Psoas muscle (tissue), 8 donors: ENCODE measurements at regions of chr17 and their contacts with region 1.

Region 1: DNA sequence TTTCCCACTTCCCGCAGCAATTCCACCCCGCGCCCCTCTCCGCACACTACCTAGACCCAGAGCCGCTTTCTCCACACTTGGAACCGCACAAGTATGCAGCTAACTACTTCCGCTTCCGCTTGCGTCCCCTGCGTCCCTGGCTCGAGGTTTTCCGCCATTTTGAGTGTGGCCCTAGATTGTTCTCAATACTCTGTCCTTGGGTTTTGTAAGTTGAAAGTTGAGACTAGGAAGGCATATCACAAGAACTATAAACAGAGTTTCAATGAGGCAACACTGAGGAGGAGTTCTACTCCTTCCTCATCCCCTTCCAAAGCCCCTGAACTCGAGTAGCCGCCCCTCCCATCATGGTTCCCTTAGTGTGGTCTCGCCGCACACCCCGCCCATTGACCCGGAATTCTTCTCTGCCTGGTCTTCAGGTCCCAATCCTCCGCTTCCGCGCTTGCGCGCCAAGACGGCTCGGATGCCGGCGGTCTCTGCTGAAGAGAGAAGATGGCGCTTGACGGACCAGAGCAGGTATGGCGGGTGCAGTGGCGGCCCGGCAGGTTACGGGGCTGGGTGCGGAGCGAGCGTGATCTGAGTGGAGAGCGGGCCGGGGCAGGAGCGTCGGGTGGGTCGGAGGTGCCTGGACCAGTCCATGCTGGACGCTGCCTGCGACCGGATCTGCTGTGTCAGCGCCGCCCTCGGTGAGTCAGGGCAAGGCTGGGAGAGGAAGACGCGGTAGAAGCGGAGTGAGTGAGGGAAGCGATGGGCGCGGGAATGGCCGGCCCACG is at the starts of genes FTSJ3 and PSMC5:
- DNase-seq: peak; percentile 96 to 99
- ATAC-seq: peak; percentile 91 to 95 (median 93)
- H3K4me3 ChIP-seq: peak within 1 kb of the TSS; percentile 93
- H3K27ac ChIP-seq: peak within 1 kb of the TSS; percentile 97
- H3K4me1 ChIP-seq: peaks cover 32% of the 10 kb centered on the region
- H3K27me3 ChIP-seq: no peaks in the 10 kb centered on the region
- CTCF ChIP-seq: peak; percentile 40
- total RNA-seq, gene FTSJ3: 20.1 to 26.2 (median 24.8) TPM
- total RNA-seq, gene PSMC5: 147 to 224 (median 176) TPM

Region 2: GRCh38 chr17:63773381-63774140 is 53.6 kb before region 1 on chr17 and contains the start of gene CCDC47:
- intact Hi-C with region 1: loop called (anchors 2 to 5 kb)
- DNase-seq: peak; percentile 98 to 99
- ATAC-seq: peak; percentile 90 to 94 (median 92)
- H3K4me3 ChIP-seq: peak within 1 kb of the TSS; percentile 89
- H3K27ac ChIP-seq: peak within 1 kb of the TSS; percentile 98
- H3K4me1 ChIP-seq: peaks cover 35% of the 10 kb centered on the region
- H3K27me3 ChIP-seq: no peaks in the 10 kb centered on the region
- CTCF ChIP-seq: no peak
- total RNA-seq, gene CCDC47: 67.4 to 138 (median 114) TPM

Region 3: DNA sequence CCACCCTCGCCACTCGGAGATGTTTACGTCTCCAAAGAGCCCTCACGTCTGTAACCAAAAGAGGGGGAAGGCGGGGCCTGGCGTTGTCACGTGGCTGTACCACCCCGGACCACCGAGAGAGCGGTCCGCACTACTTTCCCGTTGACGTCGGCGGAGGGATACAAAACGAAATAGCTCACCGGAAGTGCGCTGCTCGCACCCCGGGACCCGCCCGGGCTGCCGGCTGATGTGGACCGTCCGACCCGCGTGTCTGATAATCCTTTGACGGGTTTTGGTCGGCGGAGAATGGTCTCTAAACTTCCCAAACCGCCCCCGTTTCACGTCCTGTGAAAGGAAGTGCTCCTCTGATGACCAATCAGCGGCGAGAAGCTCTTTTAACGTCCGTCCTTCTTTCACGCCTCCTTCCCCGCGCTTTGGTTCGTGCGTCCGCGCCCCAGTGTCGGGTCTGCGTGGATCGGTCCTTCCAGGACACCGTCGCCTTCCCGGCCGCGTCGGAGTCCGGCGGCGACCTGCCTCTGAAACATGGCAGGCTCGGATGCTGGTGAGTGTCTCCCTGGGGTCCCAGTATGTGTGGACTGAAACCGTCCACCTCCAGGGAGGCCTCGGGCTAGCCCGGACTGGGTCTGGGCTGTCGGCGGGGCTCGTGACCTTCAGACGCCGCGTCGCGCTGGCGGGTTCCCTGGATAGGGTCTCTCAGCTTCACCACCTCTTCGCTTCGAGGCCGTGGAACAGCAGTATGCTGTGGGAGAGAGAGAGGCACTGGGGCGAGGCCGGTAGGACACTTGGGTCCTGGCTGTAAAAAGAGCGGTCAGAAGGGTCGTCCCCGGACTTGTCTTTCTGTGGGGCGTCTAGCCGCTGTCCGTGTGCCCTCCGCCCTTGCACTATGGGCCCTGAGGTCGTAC is 679.6 kb after region 1 on chr17 and contains the start of gene CEP95:
- intact Hi-C with region 1: loop called in 1 of 2 experiments (anchors 5 kb)
- DNase-seq: peak; percentile 96 to 98
- ATAC-seq: peak; percentile 81 to 84 (median 84)
- H3K4me3 ChIP-seq: peak within 1 kb of the TSS; percentile 97
- H3K27ac ChIP-seq: peak within 1 kb of the TSS; percentile 100
- H3K4me1 ChIP-seq: peaks cover 47% of the 10 kb centered on the region
- H3K27me3 ChIP-seq: no peaks in the 10 kb centered on the region
- CTCF ChIP-seq: no peak
- total RNA-seq, gene CEP95: 9.3 to 21.7 (median 11.6) TPM